Dendritic cell treated with granulocyte-macrophage colony-stimulating factor and Interleukin-4, amounts not matched to agents 40 ng/mL and 50 ng/mL, for 4 days (primary cell): ENCODE measurements at regions of chr19 and their contacts with region 1.

Region 1: DNA sequence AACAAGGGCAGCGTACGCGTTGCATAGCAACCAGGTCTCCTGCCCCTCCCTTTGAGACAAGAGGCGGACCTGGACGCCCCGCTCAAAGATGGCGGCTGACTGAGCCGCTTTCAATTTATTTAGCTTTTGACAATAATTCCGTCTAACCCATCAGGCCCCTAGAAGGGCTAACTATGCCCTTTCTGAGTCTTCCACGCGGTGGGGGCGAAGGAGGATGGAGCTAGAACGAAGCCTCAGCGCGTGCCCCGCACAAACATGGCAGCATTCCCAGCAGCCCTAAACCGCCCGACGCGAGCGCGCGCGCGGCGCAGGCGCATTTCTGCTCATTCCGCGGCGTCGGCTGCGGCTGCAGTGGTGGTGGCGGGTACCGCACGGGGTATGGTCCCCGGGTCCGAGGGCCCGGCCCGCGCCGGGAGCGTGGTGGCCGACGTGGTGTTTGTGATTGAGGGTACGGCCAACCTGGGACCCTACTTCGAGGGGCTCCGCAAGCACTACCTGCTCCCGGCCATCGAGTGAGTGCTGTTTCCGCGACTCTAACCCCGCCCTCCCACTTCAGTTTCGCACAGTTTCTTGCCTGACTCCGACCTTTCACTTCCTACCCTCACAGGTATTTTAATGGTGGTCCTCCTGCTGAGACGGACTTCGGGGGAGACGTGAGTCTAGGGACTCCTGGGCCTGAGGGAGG is at the start of gene MED25:
- H3K4me3 Mint-ChIP-seq: peak within 1 kb of the TSS; percentile 99
- H3K27ac Mint-ChIP-seq: peak within 1 kb of the TSS; percentile 98
- H3K4me1 Mint-ChIP-seq: peaks cover 34% of the 10 kb centered on the region
- H3K27me3 Mint-ChIP-seq: no peaks in the 10 kb centered on the region

Region 2: GRCh38 chr19:49766007-49766937 is 51.8 kb before region 1 on chr19:
- intact Hi-C with region 1: loop called (anchors 1 kb)
- H3K4me3 Mint-ChIP-seq: peak overlapping the region; percentile 96
- H3K27ac Mint-ChIP-seq: peak overlapping the region; percentile 99
- H3K4me1 Mint-ChIP-seq: peaks cover 73% of the 10 kb centered on the region
- H3K27me3 Mint-ChIP-seq: no peaks in the 10 kb centered on the region

Region 3: DNA sequence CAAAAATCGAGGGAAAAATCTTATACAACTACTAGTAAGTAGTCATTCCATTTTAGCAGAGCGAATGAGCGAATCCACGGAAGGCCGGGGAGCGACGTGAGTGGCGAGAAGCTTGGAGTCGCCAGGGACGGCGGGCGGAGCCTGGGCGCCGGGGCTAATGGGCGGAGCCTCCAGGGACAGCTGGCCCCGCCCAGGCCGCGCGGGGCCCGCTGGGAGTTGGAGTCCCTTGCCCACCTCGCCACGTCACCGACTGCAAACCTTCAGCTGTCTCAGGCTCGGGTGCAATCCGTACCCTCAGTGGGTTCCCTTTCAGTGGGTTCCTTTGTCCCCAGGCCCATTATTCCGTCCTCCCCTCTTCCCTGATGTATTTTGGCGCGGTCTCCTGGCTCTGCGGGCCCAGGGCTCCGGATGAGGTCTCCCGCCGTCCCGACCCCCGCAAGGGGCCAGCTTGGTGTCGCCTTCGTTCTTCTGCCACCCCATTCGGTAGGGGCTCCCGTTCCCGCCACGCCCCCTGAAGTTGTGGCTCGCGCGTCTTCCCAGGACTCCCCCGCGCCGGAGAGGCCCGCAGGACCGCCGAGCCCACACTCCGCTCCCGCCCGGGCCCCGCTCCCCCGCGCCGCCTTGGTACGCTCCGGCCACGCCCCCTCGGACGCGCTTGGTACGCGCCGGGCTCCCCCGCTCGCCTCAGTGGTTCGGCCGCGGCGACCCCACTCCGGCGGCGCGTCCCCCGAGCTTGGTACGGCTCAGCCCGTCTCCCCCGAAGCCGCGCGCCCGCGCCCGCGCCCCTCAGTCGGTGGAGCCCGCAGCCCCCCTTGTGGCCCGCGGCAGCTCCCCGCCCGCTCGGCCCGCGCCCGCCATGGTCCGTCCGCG is 32.6 kb after region 1 on chr19 and contains the start of gene PTOV1:
- intact Hi-C with region 1: loop called (anchors 1 kb)
- H3K4me3 Mint-ChIP-seq: peak within 1 kb of the TSS; percentile 89
- H3K27ac Mint-ChIP-seq: peak within 1 kb of the TSS; percentile 98
- H3K4me1 Mint-ChIP-seq: peaks cover 52% of the 10 kb centered on the region
- H3K27me3 Mint-ChIP-seq: peaks cover 12% of the 10 kb centered on the region

Region 4: DNA sequence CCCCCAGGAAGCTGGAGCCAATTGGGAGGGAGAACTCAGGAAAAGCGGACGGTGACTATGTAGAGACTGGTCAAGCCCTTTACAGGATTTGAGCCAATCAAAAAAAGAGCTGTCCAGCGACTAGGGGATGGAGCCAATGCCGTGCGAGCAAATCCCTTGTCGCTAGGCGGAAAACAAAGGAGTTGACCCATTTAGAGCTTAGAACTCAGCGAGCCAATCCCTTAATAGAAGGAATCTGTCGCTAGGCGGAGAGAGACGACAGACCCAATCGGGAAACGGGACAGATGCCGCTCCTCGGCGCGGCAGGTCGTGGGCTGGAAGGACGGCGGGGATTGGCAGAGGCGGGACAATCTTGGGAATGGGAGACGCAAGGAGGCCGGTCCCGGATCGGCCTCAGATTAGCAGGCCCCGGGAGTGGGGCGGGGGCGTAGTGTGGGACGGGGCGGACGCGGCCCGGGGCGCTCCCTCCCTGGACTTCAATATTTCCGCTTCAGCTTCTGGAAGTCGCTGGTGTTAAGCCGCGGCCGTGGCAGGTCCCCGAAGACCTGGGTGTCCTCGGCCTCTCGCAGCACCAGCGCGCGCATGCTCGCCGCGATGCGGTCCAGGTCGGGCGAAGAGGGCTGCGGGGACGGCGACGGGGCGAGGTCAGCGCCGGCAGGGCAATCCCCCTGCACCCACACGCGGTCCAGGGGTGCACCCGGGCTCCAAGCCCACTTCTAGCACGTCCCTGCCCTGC is 51.5 kb after region 1 on chr19:
- intact Hi-C with region 1: loop called (anchors 5 kb)
- H3K4me3 Mint-ChIP-seq: no peak overlapping the region
- H3K27ac Mint-ChIP-seq: no peak overlapping the region
- H3K4me1 Mint-ChIP-seq: peaks cover 56% of the 10 kb centered on the region
- H3K27me3 Mint-ChIP-seq: no peaks in the 10 kb centered on the region

Region 5: DNA sequence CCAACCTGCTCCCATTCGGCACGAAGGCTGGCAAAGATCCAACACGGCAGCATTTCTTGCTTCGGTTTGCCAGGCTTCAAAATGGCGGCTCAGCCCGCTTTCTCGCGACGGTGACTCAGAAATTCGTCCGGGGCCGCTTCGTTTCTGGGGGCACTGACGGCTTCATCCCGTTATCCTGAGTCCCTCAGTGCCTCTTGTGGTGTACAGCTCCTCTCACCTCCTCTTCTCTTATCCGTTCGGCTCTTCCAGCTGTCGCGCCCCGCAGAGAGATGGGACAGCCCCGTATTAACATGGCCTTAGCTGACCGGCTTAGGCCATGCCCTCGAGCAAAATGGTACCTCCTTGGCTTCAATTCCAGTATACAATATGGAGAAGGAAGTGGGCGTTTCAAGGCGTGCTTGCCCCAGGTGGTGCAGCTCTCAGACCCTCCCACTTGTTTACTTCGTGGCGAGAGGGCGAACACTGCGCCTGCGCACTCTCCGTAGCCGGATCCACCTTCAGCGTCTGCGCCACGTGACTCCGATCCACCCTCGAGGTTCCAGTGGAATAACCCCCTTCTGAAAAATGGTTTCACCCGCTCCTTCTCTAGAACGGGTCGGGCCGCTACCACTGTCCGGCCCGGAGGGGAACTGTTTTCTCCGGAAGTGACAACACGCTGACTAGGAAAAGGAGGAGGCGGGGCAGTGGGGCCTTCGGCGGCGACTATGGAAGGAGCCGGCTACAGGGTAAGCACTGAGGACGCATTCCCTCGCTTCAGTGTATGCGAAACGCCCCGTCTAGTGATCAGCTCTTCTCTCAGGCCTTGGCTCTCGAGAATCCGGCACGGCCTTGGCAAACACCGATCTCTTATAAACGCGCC is 59.1 kb after region 1 on chr19 and contains the starts of genes AKT1S1 and TBC1D17:
- intact Hi-C with region 1: loop called (anchors 2 kb)
- H3K4me3 Mint-ChIP-seq: no peak within 1 kb of the TSS
- H3K27ac Mint-ChIP-seq: no peak within 1 kb of the TSS
- H3K4me1 Mint-ChIP-seq: peaks cover 78% of the 10 kb centered on the region
- H3K27me3 Mint-ChIP-seq: no peaks in the 10 kb centered on the region